HCT116 (cell line): ENCODE measurements at regions of chr7 and their contacts with region 1.

Region 1: DNA sequence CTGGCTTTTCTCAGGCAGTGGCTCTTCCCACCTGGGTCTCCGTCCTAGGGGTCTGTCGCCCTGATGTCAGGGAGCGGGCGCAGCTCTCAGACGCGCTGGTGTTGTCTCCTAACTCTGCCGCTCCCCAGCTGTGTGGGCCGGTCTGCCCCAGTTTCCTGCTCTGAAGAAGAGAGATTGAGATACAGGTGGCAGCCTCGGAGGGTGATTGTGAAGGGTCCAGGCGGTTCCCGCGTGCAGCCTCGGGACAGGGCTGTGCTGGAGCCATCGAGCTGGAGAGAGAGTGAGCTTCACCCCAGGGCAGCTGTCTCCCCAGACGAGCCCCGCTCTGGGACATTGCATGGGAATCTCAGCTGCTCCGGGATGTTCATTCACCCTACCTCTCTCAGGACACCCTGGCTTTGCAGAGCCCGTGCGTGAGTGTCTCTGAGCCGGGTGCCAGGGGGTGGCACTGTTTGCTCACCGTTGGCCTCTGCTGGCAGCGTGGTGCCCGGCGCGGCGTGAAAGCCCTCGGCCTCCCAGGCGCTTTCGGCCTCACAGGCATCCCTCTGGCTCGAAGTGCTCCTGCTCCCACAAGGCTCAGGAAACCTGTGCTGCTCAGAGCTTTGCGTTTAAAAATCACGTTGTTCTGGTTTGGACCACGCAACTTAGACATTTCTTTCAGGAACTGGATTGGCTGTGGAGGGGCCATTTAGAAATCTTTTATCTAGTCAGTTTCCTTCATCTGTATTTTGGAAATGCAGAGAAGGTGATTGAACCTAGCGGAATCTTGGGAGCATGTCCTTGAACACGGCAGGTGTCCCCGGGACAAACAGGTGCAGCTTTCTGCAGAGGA is 33.8 kb upstream of the ZFAND2A start:
- DNase-seq: peak; percentile 40
- ATAC-seq: peak; percentile 99
- H3K4me3 ChIP-seq: no peak overlapping the region
- H3K27ac ChIP-seq: no peak overlapping the region
- H3K4me1 ChIP-seq: peaks cover 0 to 6% of the 10 kb centered on the region in 2 experiments; a peak in 2 of 4 replicates
- H3K27me3 ChIP-seq: peaks cover 6% of the 10 kb centered on the region; the same call in 1 of the 2 replicates
- CTCF ChIP-seq: peak; percentile 73 to 90 (median 75)
- POLR2A ChIP-seq: no peak
- RAD21 ChIP-seq: peak; percentile 97

Region 2: DNA sequence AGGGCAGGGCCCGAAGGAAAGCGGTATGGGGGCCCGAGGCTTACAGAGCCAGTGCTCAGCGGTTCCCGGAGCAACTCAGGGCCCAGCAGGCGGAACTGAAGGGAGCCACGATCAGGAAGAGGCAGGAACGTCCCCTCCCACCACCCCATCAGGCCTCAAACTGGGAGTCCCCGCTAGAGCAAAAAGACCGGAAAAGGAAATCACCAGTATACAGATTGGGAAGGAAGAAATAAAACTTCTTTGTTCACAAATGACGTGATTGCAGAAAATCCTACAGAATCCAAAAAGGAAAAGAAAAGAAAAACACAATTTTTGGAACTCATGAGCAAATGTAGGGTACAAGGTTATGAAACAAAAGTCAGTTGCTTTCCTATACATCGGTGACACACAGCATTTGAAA is 12.2 kb before region 1 on chr7:
- CTCF ChIA-PET with region 1: interaction called, 26 read pairs
- POLR2A ChIA-PET with region 1: no interaction called
- RAD21 ChIA-PET with region 1: no interaction called
- intact Hi-C with region 1: no loop called
- DNase-seq: no peak
- ATAC-seq: no peak
- H3K4me3 ChIP-seq: no peak overlapping the region
- H3K27ac ChIP-seq: no peak overlapping the region
- H3K4me1 ChIP-seq: peaks cover 6 to 15% of the 10 kb centered on the region in 2 experiments
- H3K27me3 ChIP-seq: no peaks in the 10 kb centered on the region
- CTCF ChIP-seq: no peak
- POLR2A ChIP-seq: no peak
- RAD21 ChIP-seq: no peak

Region 3: GRCh38 chr7:1412322-1413261 is 218.8 kb after region 1 on chr7:
- CTCF ChIA-PET with region 1: interaction called, 4 read pairs
- POLR2A ChIA-PET with region 1: no interaction called
- RAD21 ChIA-PET with region 1: interaction called, 3 to 5 read pairs
- intact Hi-C with region 1: loop called (anchors 1 kb)
- DNase-seq: peak; percentile 77
- ATAC-seq: peak; percentile 96
- H3K4me3 ChIP-seq: peak overlapping the region in 1 of 2 experiments; percentile 5; a peak in 1 of 4 replicates
- H3K27ac ChIP-seq: 0 out of 2 replicates have a peak overlapping the region, but pooled peaks have one; percentile 1
- H3K4me1 ChIP-seq: peaks cover 2 to 15% of the 10 kb centered on the region in 2 experiments; a peak in 2 of 4 replicates
- H3K27me3 ChIP-seq: no peaks in the 10 kb centered on the region
- CTCF ChIP-seq: peak; percentile 77 to 91 (median 87)
- POLR2A ChIP-seq: no peak
- RAD21 ChIP-seq: peak; percentile 96

Region 4: DNA sequence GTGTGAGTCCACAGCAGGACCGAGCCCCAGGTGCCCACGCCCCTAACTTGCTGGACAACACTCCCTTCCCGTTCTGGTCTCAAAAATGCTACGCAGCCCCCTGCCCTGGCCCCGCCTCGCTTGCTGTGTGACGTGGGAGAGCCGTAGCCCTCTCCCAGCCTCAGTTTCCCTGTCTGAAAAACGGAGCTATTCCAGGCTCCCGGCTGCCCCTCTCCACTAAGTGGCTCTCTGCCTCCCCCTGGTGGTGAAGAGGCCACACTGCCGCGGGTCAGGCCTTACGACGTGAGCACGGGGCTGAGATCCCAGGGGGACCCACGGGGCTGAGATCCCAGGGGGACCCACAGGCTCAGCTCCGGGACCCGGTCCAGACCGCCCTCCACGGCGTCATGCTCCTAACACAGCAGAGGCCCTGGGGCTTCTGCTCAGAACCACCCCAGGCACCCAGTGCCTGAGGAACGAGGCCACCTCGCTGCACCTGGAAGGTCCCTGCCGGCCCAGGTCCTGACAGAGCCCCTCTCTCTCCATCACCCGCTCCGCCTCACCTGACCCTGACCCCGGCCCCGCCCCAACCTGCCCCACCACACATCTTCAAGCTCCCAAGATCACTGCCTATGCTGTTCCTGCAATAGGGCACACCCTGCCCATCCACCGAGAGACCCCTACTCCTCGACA is 238.7 kb after region 1 on chr7:
- CTCF ChIA-PET with region 1: interaction called, 3 read pairs
- POLR2A ChIA-PET with region 1: no interaction called
- RAD21 ChIA-PET with region 1: no interaction called
- intact Hi-C with region 1: loop called (anchors 1 kb)
- DNase-seq: peak; percentile 21
- ATAC-seq: peak; percentile 83
- H3K4me3 ChIP-seq: no peak overlapping the region
- H3K27ac ChIP-seq: no peak overlapping the region
- H3K4me1 ChIP-seq: peaks cover 0 to 9% of the 10 kb centered on the region in 2 experiments; a peak in 2 of 4 replicates
- H3K27me3 ChIP-seq: no peaks in the 10 kb centered on the region
- CTCF ChIP-seq: peak; percentile 79 to 98 (median 94)
- POLR2A ChIP-seq: no peak
- RAD21 ChIP-seq: peak; percentile 79

Region 5: DNA sequence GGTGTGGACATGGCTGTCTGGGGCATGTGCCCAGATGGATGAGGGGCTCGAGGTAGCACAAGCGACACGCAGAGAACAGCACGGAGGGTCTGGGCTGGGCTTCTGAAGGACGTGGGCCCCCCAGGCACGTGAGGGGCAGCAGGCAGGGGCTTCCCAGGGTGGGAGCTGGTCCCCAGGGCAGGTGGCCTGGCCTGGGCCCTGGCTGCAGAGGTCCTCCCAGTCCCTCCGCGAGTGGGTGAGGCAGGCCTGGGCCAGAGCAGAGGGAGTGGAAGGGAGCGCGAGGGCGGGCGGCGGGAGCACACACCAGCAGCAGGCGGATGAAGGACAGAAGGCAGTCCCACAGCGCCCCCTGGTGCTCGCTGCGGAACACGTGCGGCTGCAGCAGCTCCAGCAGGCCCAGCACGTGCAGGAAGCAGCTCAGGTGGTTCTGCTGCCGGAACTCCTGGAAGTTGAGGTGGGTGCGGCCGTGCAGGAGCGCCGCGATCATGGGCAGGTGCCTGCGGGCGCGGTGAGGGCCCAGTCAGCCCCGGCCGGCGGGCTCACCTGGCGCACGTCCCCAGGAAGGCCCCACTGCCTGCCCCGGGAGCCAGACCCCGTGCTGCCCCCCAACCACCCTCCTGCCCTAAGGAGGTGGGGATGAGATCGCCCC is 280.2 kb after region 1 on chr7:
- CTCF ChIA-PET with region 1: interaction called, 20 read pairs
- POLR2A ChIA-PET with region 1: no interaction called
- RAD21 ChIA-PET with region 1: no interaction called
- intact Hi-C with region 1: loop called (anchors 1 kb)
- DNase-seq: peak; percentile 72
- ATAC-seq: peak; percentile 80
- H3K4me3 ChIP-seq: no peak overlapping the region
- H3K27ac ChIP-seq: peak overlapping the region; percentile 62; the same call in 1 of the 2 replicates
- H3K4me1 ChIP-seq: peaks cover 3 to 13% of the 10 kb centered on the region in 2 experiments; a peak in 3 of 4 replicates
- H3K27me3 ChIP-seq: no peaks in the 10 kb centered on the region
- CTCF ChIP-seq: peak; percentile 71 to 84 (median 82); a peak in 5 of 6 replicates
- POLR2A ChIP-seq: no peak
- RAD21 ChIP-seq: peak; percentile 94